Activated CD8-positive, alpha-beta T cell treated with anti-CD3 and anti-CD28 coated beads for 36 hours (primary cell): ENCODE measurements at regions of chr11 and their contacts with region 1.

Region 1: DNA sequence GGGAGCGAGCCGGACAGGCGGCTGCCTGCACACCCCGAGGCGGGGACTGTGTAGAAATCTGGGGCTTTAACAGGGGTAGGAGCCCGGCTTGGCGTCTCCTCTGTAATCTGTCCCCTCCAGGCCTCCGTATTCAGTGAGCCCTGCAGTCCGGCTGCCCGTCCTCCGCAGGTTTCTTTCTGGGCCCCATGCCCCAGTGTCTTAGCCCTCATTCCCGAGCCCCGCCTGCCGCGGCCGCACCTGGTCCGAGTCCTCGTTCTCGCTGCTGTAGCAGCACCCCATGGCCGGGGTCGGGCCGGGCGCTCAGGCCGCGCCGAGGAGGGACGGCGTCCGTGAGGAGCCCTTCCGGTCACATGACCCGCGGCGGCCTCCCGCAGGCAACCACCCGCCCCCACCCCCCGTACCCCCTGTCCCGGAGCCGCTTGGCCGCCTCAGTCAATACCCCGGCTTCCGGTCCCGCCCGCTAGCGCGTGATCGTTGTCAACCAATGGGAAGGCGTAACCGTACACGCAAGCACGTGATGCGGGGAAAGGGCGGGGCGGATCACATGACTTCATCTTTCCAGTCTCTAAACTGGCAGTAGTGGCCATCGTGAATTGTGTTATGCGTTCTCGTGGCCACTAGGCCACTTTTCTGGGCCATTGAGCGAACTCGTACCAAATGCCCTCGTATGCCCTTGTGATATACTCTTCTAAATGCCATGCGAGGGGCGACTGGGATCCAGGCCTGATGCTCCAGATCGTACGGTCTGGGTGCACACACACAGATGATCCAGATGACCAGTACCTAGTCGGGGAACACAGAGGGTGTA is at the start of gene LAMTOR1:
- DNase-seq: peak; percentile 100
- ATAC-seq: peak; percentile 97
- H3K4me3 Mint-ChIP-seq: peak within 1 kb of the TSS; percentile 95
- H3K27ac Mint-ChIP-seq: peak within 1 kb of the TSS; percentile 96
- H3K4me1 Mint-ChIP-seq: peaks cover 37% of the 10 kb centered on the region
- H3K27me3 Mint-ChIP-seq: no peaks in the 10 kb centered on the region
- CTCF ChIP-seq: no peak
- total RNA-seq, gene LAMTOR1: 50.3 to 52.4 TPM

Region 2: DNA sequence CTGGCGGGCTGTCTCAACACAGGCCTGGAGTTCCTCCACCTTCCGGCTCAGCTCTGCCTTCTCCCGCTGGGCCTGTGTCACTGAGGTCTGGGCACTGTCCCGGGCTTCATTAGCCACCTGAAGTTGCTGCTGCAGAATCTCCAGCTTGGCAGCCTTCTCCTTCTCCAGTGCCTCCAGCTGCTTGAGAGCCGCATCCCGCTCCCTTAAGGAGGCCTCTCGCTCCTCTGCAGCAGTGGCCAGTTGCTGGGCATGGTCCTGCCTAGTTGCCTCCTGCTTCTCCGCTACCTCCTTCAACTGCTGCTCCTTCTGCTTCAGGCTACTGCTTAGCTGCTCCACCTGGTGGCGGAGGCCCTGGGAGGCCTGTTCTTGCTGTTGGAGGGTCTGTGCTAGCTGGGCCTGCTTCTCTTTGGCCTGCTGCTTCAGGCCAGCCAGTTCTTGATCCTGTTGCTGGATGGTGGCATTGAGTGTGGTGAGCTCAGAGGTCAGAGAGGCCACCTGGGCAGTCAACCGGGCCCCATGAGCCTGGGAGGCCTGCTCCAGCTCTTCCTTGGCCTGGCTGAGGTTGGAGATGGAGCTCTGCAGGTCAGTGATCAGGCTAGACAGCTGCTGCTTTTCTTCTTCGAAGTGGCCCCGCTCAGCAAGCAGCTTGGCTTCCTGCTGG is 87.5 kb before region 1 on chr11:
- CTCF ChIA-PET with region 1: interaction called, 278 read pairs
- POLR2A ChIA-PET with region 1: interaction called, 3 read pairs
- intact Hi-C with region 1: no loop called
- DNase-seq: peak; percentile 17
- ATAC-seq: peak; percentile 25
- H3K4me3 Mint-ChIP-seq: no peak overlapping the region
- H3K27ac Mint-ChIP-seq: no peak overlapping the region
- H3K4me1 Mint-ChIP-seq: no peaks in the 10 kb centered on the region
- H3K27me3 Mint-ChIP-seq: no peaks in the 10 kb centered on the region
- CTCF ChIP-seq: no peak

Region 3: GRCh38 chr11:72155751-72156150 is 52.6 kb after region 1 on chr11:
- CTCF ChIA-PET with region 1: no interaction called
- POLR2A ChIA-PET with region 1: no interaction called
- intact Hi-C with region 1: no loop called
- DNase-seq: no peak
- ATAC-seq: no peak
- H3K4me3 Mint-ChIP-seq: no peak overlapping the region
- H3K27ac Mint-ChIP-seq: no peak overlapping the region
- H3K4me1 Mint-ChIP-seq: no peaks in the 10 kb centered on the region
- H3K27me3 Mint-ChIP-seq: peaks cover 7% of the 10 kb centered on the region
- CTCF ChIP-seq: no peak

Region 4: DNA sequence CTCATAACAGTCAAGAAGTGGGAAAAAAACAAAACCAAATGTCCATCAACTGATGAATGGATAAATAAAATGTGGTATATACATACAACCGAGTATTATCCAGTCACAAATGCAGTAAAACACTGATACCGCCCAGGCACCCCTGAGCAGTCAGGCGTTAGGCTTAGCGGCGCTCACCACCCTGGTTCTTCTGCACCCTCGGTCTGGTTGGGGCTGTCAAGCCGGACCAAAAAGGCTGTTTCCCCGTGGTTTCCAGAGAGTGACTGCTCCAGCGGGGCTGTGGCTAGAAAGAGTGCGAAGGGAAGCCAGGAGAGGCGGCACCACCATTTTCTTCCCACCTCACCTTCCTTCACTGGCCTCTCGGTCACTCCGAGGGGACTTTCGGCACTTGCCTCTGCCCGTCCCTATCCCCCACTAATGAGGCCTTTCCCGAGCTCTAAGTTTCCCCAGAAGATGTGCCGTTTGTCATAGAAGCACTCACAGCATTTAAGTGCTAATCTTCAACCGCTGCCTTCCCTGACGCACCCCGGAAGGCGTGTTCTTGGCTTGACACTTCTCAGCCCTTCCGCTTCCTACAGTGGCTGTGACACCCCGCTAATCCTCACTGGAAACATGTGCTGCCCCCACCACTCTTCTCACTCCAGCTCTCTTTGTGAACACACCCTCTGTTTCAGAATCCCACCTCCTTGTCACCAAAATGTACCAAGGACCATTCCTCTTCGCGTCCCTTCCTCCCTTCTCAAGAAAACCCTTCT is 996.5 kb after region 1 on chr11:
- CTCF ChIA-PET with region 1: no interaction called
- POLR2A ChIA-PET with region 1: no interaction called
- intact Hi-C with region 1: no loop called
- DNase-seq: no peak
- ATAC-seq: no peak
- H3K4me3 Mint-ChIP-seq: no peak overlapping the region
- H3K27ac Mint-ChIP-seq: no peak overlapping the region
- H3K4me1 Mint-ChIP-seq: peaks cover 21% of the 10 kb centered on the region
- H3K27me3 Mint-ChIP-seq: no peaks in the 10 kb centered on the region
- CTCF ChIP-seq: no peak